Activated CD4-positive, alpha-beta T cell treated with anti-CD3 and anti-CD28 coated beads for 36 hours (primary cell): ENCODE measurements at regions of chr2 and their contacts with region 1.

Region 1: DNA sequence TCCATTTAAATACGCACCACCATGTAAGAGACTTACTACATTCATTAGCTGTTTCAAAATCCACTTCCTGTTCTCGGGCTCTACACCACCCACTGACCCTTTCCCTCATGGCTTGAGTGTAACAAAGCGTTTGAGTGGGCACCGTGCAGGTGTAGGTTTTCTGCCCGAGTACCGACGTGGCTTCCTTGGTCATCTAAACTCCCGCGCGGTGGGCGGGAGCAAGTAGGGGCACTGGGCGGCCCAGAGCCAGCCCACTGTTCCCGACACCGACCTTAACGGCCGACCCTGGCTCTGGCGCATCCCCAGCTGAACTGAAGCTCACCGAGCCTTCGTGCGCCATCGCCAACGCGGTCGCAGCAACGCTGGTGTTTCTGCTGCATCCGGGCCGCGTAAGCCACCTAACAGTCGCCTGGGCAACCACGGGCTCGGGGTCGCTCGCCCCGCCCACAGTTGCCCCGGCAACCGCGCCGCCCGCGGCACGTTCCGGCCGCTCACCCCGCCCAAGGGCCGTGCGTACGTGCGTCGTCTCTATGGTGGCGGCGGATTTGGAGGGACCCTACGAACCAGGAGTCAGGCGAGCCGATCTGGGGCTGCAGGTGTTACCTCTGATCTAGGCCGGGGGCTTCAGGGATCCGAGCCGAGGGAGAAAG is at the starts of genes C2orf81 and WDR54:
- DNase-seq: peak; percentile 97
- ATAC-seq: peak; percentile 92
- H3K4me3 Mint-ChIP-seq: peak within 1 kb of the TSS; percentile 91
- H3K27ac Mint-ChIP-seq: peak within 1 kb of the TSS; percentile 98
- H3K4me1 Mint-ChIP-seq: peaks cover 34% of the 10 kb centered on the region
- H3K27me3 Mint-ChIP-seq: no peaks in the 10 kb centered on the region
- total RNA-seq, gene C2orf81: 4.5 to 4.9 TPM
- total RNA-seq, gene WDR54: 103 to 119 TPM

Region 2: GRCh38 chr2:74178201-74179062 is 242.9 kb before region 1 on chr2 and contains the start of gene MOB1A:
- CTCF ChIA-PET with region 1: no interaction called
- POLR2A ChIA-PET with region 1: no interaction called
- intact Hi-C with region 1: loop called in 1 of 2 experiments (anchors 1 kb)
- DNase-seq: peak; percentile 99
- ATAC-seq: peak; percentile 95
- H3K4me3 Mint-ChIP-seq: peak within 1 kb of the TSS; percentile 82
- H3K27ac Mint-ChIP-seq: peak within 1 kb of the TSS; percentile 87
- H3K4me1 Mint-ChIP-seq: peaks cover 42% of the 10 kb centered on the region
- H3K27me3 Mint-ChIP-seq: no peaks in the 10 kb centered on the region
- total RNA-seq, gene MOB1A: 96.6 to 149 TPM

Region 3: DNA sequence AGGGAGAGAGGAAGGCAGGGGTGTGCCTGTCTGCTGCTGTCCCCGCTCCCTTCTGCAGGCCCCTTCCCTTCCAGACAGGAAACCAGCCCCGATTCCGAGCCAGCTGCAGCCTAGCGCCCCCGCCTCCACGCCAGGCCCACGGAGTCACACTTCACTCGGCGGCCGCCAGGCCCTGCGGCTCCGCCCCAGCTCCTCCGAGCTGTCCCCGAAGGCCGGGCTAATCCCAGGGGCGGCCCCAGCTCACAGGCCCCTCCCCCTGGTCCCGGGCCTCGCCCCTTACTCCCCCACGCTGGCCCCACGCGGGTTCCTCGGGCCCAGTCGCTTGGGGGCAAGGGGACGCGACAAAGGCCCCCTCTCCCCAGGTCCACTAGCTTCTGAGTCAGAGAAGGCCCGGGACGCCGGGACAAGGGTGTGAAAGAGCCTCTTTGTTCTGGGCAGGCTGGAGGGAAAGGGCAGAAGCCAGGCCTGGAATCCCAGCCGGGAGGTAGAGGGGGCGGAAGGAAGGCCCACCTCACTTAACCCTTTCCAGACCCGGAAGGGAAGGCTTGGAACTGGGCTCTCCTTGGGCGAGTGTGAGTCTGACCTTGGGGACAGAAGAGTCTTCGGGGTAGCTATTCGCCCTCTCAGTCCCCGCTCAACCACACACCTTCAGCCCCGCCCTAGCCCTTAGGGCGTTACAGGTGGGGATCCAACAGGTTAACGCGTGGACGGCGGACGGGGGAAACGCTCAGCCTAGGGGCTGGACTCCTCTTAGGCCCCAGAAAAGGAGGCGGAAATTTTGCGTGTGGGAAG is 19.2 kb after region 1 on chr2:
- CTCF ChIA-PET with region 1: interaction called, 4 read pairs
- POLR2A ChIA-PET with region 1: no interaction called
- intact Hi-C with region 1: loop called in 1 of 2 experiments (anchors 1 kb)
- DNase-seq: peak; percentile 77
- ATAC-seq: peak; percentile 94
- H3K4me3 Mint-ChIP-seq: no peak overlapping the region
- H3K27ac Mint-ChIP-seq: no peak overlapping the region
- H3K4me1 Mint-ChIP-seq: peaks cover 10% of the 10 kb centered on the region
- H3K27me3 Mint-ChIP-seq: peaks cover 31% of the 10 kb centered on the region

Region 4: DNA sequence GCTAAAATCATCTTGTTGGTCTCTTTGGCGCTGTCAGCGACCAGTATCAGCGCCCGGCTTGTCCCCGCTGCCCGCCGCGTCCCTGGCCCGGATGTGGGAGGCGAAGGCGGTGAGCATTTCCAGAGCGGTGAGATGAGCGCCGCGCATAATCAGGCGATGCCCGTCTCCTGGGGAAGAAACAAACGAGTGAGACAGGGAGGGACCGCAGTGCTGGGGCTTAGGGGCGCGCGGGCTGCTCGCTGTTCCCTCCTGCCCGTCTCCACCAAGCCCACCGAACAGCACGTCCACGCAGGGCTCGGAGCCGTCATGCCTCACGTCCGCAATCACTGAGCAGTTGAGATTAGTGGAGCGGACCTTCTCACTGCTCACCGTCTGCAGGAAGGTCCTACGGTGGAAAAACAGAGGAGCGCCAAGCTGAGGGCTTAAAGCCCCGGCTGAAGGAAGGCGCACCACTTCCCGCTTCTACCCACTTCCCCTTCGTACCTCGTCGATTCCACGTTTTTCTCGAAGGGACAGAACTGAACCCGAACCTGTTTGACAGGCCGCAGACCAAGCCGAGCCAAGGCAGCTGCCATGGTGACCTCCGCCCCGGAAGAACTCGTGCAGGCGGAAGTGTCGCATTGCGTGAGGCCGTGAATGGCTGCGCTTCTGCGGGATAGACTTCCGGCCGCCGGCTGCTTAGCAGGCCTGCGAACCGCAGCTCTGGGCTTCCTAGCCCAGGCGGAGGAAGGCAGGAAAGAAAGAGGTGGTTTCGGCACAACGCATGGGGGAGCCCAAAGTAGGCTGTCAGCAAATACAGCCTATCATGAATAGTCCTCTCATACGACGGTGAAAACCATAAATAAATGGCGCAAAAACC is 51.0 kb after region 1 on chr2 and contains the start of gene MRPL53:
- CTCF ChIA-PET with region 1: no interaction called
- POLR2A ChIA-PET with region 1: no interaction called
- intact Hi-C with region 1: loop called in 1 of 2 experiments (anchors 1 kb)
- DNase-seq: peak; percentile 97
- ATAC-seq: peak; percentile 92
- H3K4me3 Mint-ChIP-seq: peak within 1 kb of the TSS; percentile 98
- H3K27ac Mint-ChIP-seq: peak within 1 kb of the TSS; percentile 93
- H3K4me1 Mint-ChIP-seq: peaks cover 21% of the 10 kb centered on the region
- H3K27me3 Mint-ChIP-seq: no peaks in the 10 kb centered on the region
- total RNA-seq, gene MRPL53: 87.4 to 88.5 TPM

Region 5: DNA sequence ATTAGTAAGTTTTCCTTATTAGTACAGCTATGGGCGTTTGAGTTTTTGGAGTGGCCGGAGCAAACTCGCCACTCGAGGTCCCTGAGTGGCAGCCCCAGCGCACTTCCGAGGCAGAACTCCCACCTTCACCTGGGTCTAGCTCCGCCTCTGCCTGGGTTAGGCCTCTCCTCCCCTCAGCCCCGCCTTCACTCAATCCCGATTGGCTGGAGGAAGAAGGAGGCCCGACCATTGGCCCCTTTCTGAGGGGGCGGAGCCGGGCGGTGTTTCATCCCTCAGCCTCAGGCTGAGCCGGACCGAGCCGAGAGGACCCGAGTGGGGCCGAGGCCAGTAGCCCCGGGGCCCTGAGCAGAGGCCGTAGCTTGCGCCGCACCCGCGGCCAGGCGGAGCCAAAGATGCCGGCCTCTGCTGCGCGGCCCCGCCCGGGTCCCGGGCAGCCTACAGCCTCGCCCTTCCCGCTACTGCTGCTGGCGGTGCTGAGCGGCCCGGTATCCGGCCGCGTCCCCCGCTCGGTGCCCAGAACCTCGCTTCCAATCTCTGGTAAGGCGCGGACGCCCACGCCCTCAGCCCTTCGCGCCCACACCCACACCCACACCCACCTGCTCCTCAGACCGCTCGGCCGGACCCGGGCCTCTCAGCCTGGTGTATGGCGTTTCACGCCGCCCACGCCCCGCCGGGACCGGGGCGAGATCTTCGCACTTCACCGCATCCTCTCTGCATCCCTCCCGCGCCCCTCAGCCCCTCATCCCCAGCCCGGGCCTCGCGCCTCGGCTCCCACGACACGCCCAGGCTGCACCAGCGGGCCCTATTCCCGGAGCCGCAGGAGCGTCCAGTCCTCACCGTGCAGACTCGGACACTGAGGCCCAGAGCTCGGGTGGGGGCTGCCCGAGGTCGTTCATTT is 232.9 kb after region 1 on chr2 and contains the start of gene SEMA4F:
- CTCF ChIA-PET with region 1: no interaction called
- POLR2A ChIA-PET with region 1: no interaction called
- intact Hi-C with region 1: loop called in 1 of 2 experiments (anchors 1 kb)
- DNase-seq: peak; percentile 97
- ATAC-seq: peak; percentile 100
- H3K4me3 Mint-ChIP-seq: peak within 1 kb of the TSS; percentile 76
- H3K27ac Mint-ChIP-seq: peak within 1 kb of the TSS; percentile 49
- H3K4me1 Mint-ChIP-seq: peaks cover 13% of the 10 kb centered on the region
- H3K27me3 Mint-ChIP-seq: peaks cover 7% of the 10 kb centered on the region
- total RNA-seq, gene SEMA4F: 5.7 to 7.4 TPM